ENCODE measurements at regions of chr2 and their contacts with region 1.

Region 1: DNA sequence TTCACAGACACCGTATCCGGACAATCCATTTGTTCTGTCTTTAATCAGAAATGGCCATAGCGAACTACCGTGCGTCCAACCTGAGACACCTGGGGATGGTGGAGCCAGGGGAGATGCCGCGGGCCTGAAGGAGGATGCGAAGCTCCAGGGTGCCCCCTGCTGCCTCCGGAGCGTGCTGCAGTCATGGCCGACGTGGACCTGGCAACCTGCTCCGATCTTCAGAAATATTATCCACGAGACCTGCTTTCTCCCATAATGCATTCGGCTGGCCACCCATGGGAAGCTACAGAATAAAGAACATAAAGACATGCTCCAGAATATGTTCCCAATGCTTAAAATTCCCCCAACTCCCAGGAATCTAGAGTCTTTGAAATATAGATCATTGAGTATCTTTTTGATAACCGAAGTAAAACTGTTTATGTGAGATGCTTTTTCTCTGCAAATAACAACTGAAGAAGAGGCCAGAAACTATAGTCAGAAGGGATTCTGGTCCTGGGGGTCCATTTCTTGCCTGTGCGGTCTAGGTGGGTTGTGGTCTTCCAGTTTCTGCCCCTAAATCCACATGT is 30.7 kb upstream of the SLC66A3 start:
- DNase-seq: peak; percentile 83
- ATAC-seq: peak; percentile 89
- H3K4me3 Mint-ChIP-seq: no peak overlapping the region
- H3K27ac Mint-ChIP-seq: no peak overlapping the region
- H3K4me1 Mint-ChIP-seq: peaks cover 2% of the 10 kb centered on the region
- H3K27me3 Mint-ChIP-seq: no peaks in the 10 kb centered on the region
- CTCF ChIP-seq: peak; percentile 88

Region 2: GRCh38 chr2:11073251-11073650 is 51.3 kb before region 1 on chr2:
- CTCF ChIA-PET with region 1: interaction called, 11 read pairs
- POLR2A ChIA-PET with region 1: no interaction called
- intact Hi-C with region 1: no loop called
- DNase-seq: peak; percentile 52
- ATAC-seq: peak; percentile 34
- H3K4me3 Mint-ChIP-seq: no peak overlapping the region
- H3K27ac Mint-ChIP-seq: no peak overlapping the region
- H3K4me1 Mint-ChIP-seq: no peaks in the 10 kb centered on the region
- H3K27me3 Mint-ChIP-seq: peaks cover 22% of the 10 kb centered on the region
- CTCF ChIP-seq: no peak

Region 3: DNA sequence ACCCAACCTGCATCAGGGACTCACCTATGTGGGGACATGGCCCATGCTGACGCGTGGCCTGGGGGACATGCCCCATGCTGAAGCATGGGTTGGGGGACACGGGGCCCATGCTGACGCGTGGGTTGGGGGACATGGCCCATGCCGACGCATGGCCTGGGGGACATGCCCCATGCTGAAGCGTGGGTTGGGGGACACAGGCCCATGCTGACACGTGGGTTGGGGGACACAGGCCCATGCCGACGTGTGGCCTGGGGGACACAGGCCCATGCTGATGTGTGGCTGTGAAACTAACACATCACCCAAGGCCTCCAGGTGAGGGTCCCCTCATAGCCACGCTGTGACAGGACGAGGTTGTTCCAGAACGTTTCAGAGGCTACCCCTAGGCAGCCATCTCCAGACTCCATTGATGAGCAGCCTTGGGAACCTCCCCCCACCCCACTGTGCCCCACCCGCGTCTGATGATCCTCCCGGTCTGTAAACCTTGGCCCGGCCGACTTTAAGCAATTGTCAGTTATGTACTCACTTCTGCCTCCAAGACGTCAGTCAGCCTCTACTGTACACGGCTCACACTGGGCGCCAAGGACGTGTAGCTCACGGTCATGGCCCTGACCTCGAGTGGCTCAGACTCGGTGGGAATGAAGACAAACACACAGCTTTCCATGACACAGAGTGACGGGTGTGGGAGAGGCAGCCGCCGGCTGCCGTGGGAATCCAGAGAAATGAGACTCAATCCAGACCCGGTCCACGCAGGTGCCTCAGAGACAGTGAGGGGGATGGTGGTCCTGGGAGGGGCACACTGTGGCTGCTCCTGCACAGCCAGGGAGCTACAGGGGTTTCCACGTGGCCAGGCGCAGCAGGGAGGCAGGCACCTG is 19.6 kb before region 1 on chr2:
- CTCF ChIA-PET with region 1: interaction called, 10 read pairs
- POLR2A ChIA-PET with region 1: no interaction called
- intact Hi-C with region 1: no loop called
- DNase-seq: no peak
- ATAC-seq: no peak
- H3K4me3 Mint-ChIP-seq: no peak overlapping the region
- H3K27ac Mint-ChIP-seq: no peak overlapping the region
- H3K4me1 Mint-ChIP-seq: peaks cover 9% of the 10 kb centered on the region
- H3K27me3 Mint-ChIP-seq: no peaks in the 10 kb centered on the region
- CTCF ChIP-seq: no peak

Region 4: GRCh38 chr2:11142345-11142744 is 17.8 kb after region 1 on chr2:
- CTCF ChIA-PET with region 1: no interaction called
- POLR2A ChIA-PET with region 1: no interaction called
- intact Hi-C with region 1: no loop called
- DNase-seq: no peak
- ATAC-seq: no peak
- H3K4me3 Mint-ChIP-seq: no peak overlapping the region
- H3K27ac Mint-ChIP-seq: no peak overlapping the region
- H3K4me1 Mint-ChIP-seq: no peaks in the 10 kb centered on the region
- H3K27me3 Mint-ChIP-seq: no peaks in the 10 kb centered on the region
- CTCF ChIP-seq: no peak

Measured in activated CD8-positive, alpha-beta T cell treated with anti-CD3 and anti-CD28 coated beads for 36 hours (primary cell).